GM12878 (cell line): ENCODE measurements at regions of chr4 and their contacts with region 1.

Region 1: DNA sequence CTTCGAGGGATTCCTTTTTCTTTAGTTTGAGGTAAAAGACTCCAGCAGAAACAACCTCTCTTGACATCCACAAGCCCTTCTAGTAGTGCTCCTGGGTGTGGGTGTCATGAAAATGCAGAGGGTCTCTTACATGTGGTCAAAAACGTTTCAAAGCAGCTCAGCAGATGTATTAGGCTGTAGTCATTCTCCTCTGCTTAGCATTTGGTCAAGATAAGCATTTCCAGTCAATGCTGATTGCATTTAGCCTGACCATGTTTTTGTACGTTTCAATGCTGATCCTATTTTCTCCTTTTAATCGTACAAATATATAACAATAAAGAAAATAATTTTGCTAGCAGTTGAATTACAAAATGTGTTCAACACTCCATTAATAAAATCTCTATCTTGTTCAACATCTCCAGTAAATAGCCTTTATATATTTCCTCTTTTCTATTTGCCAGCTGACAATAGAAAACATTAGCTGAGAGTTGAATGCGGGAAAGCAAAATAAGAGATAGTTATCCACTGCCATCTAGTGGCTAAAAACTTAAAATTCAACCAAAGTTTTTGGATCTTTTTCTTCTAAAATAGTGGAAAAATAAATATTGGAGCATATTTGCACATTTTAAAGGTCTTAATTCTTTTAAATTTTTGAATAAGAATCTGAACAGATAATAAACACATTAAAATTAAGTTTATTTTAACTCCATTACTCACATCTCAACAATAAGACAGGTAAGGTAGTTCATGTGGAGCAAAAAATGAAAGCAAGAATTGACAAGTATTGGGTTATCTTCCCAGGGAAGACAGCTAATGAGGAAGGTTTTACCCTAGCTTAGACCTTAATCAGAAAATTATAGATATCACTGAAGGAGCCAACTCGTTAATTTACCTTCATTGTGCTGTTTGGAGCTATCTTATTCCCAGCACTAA is 15.2 kb upstream of the PACRGL start:
- DNase-seq: no peak
- ATAC-seq: 0 out of 3 replicates have a peak, but pooled peaks have one; percentile 14
- H3K4me3 ChIP-seq: no peak overlapping the region
- H3K27ac ChIP-seq: no peak overlapping the region
- H3K4me1 ChIP-seq: no peaks in the 10 kb centered on the region
- H3K27me3 ChIP-seq: no peaks in the 10 kb centered on the region
- CTCF ChIP-seq: peak; percentile 31 to 53 (median 43); a peak in 4 of 6 replicates
- EP300 ChIP-seq: no peak
- POLR2A ChIP-seq: no peak
- RAD21 ChIP-seq: peak; percentile 76

Region 2: DNA sequence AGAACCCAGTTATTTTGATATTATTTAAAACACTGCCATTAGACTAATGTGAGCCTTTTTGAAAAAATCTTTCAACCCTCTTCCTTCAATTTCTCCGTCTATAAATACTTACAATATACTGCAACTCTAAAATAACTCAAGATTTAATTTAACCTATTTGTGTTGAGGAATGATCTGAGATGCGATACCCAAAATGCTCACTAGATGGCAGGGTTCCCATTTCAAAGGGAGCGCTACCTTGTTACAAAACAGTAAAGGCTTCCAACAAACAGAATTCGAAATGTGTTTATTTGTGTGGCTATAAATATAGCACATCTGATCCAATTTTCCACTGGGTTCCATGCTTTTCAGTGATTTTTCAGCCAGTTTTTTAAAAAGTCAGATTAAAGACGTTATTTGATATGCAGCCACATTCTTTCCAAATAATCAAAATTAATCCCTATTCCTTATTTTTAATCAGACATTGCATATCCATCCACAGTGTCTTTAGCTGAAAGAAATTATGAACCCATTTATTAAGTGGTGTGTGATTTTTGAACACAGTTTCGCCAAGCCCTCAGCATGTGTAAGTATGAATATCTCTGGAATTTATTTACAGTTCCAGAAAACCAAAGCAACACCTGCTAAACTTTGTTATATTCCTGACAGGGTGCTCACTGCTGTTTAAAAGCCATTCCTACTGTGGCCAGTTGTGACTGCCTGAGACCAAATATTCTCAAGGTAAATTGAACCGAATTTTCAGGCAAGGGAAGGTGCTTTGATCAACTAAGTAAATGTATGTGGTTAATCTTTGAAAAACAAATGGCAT is 1995.6 kb before region 1 on chr4:
- CTCF ChIA-PET with region 1: interaction called, 5 read pairs
- POLR2A ChIA-PET with region 1: no interaction called
- RAD21 ChIA-PET with region 1: no interaction called
- SMC1A ChIA-PET with region 1: no interaction called
- in situ Hi-C with region 1: loop called (anchors 5 kb)
- intact Hi-C with region 1: loop called (anchors 5 kb)
- DNase-seq: no peak
- ATAC-seq: peak; percentile 63
- H3K4me3 ChIP-seq: no peak overlapping the region
- H3K27ac ChIP-seq: no peak overlapping the region
- H3K4me1 ChIP-seq: no peaks in the 10 kb centered on the region
- H3K27me3 ChIP-seq: no peaks in the 10 kb centered on the region
- CTCF ChIP-seq: peak; percentile 70 to 76 (median 74)
- EP300 ChIP-seq: no peak
- POLR2A ChIP-seq: no peak
- RAD21 ChIP-seq: peak; percentile 92

Region 3: DNA sequence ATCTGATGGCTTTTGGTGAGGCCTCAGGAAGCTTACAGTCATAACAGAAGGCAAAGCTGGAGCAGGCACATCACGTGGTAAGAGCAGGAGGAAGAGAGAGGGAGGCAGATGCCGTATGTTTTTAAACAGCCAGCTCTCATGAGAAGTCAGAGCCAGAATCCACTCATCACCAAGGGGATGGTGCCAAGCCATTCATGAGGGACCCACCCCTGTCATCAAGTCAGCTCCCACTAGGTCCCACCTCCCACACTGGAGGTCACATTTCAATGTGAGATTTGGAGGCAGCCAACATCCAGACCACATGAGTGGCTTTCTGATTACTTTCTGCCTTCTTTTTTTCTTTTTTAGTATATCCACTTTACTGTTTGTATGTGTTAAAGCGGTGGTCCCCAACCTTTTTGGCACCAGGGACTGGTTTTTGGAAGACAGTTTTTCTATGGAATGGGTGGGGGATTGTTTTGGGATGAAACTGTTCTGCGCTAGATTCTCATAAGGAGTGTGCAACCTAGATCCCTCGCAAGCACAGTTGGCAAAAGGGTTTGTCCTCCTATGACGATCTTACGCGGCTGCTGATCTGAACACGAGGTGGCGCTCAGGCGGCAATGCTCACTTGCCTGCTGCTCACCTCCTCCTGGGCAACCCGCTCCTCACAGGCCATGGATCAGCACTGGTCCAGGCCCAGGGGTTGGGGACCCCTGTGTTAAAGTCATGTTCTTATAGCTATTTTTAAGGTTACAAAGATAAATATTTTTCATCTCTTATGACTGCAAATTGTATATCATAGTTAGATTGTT is 371.7 kb before region 1 on chr4:
- CTCF ChIA-PET with region 1: interaction called, 3 read pairs
- POLR2A ChIA-PET with region 1: no interaction called
- RAD21 ChIA-PET with region 1: no interaction called
- SMC1A ChIA-PET with region 1: interaction called, 3 read pairs
- in situ Hi-C with region 1: no loop called
- intact Hi-C with region 1: loop called (anchors 5 kb)
- DNase-seq: peak; percentile 1
- ATAC-seq: peak; percentile 80
- H3K4me3 ChIP-seq: no peak overlapping the region
- H3K27ac ChIP-seq: no peak overlapping the region
- H3K4me1 ChIP-seq: no peaks in the 10 kb centered on the region
- H3K27me3 ChIP-seq: no peaks in the 10 kb centered on the region
- CTCF ChIP-seq: peak; percentile 39 to 49 (median 39); a peak in 4 of 6 replicates
- EP300 ChIP-seq: no peak
- POLR2A ChIP-seq: no peak
- RAD21 ChIP-seq: peak; percentile 34

Region 4: GRCh38 chr4:20416800-20417199 is 268.3 kb before region 1 on chr4:
- CTCF ChIA-PET with region 1: interaction called, 17 read pairs
- POLR2A ChIA-PET with region 1: no interaction called
- RAD21 ChIA-PET with region 1: interaction called, 5 read pairs
- SMC1A ChIA-PET with region 1: interaction called, 18 read pairs
- in situ Hi-C with region 1: loop called (anchors 5 kb)
- intact Hi-C with region 1: loop called (anchors 2 kb)
- DNase-seq: no peak
- ATAC-seq: no peak
- H3K4me3 ChIP-seq: no peak overlapping the region
- H3K27ac ChIP-seq: no peak overlapping the region
- H3K4me1 ChIP-seq: no peaks in the 10 kb centered on the region
- H3K27me3 ChIP-seq: no peaks in the 10 kb centered on the region
- CTCF ChIP-seq: no peak
- EP300 ChIP-seq: no peak
- POLR2A ChIP-seq: no peak
- RAD21 ChIP-seq: no peak

Region 5: DNA sequence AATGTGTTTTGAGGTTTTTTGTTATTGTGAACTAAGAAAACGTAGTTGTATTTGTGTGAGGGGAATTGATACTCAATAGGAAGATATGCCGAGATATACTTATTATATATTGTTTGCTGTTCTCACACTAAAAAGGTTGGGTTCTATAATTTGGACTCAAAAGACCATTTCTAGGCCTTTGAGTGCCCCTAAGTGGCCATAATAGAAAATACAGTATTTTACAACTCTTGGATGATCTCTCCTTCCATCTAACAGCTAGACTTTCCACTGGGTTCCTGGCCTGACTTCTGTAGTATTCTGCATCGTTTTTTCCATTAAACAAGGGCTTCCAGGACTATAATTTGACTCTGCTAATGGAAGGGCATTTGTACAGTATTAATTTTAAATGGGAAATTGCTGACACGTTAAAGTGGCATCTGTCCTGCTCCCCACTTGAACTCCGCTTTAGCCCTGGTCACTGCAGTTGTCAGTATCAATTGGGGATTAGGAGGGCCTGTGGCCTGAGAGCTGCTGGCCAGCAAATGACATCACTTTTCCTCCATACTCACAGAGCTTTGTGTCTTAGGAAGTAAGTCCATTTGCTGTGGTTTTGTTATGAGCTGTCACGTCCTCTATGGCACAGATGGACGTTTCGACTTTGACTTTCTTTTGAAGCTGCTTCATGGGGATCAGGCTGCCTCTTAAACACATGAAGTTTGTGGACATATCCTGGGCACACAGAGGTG is 256.5 kb before region 1 on chr4:
- CTCF ChIA-PET with region 1: interaction called, 25 read pairs
- POLR2A ChIA-PET with region 1: no interaction called
- RAD21 ChIA-PET with region 1: interaction called, 3 read pairs
- SMC1A ChIA-PET with region 1: interaction called, 3 read pairs
- in situ Hi-C with region 1: loop called (anchors 5 kb)
- intact Hi-C with region 1: no loop called
- DNase-seq: no peak
- ATAC-seq: peak; percentile 53; the same call in 2 of the 3 replicates
- H3K4me3 ChIP-seq: no peak overlapping the region
- H3K27ac ChIP-seq: no peak overlapping the region
- H3K4me1 ChIP-seq: no peaks in the 10 kb centered on the region
- H3K27me3 ChIP-seq: no peaks in the 10 kb centered on the region
- CTCF ChIP-seq: peak; percentile 14 to 40 (median 28); a peak in 3 of 6 replicates
- EP300 ChIP-seq: no peak
- POLR2A ChIP-seq: no peak
- RAD21 ChIP-seq: peak; percentile 55

Region 6: DNA sequence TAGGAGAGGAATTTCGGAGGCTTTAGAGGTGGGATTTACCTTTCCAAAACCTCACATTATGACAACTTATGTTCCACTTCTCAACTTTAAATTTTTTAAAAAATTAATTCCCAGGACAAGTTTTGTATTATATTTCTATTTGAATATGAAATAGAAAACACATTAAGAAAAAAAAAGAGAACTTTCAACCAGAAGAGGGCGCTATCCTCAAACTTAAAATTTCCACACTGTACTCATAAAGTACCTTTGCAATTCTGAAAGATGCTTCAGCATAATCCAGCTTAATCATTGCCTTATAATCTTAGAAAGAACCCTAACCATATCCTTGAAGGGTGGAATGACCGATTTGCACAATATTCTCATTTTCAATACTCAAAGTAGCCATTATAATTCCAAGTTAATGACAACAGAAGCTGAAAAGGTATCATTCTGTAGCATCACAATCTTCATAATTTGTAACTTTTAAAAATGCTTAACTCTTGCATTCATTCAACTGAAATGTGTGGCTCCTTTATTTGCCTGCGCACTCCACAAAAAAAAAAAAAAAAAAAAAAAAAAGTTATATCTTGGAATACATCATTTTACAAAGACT is 1105.4 kb after region 1 on chr4:
- CTCF ChIA-PET with region 1: no interaction called
- POLR2A ChIA-PET with region 1: no interaction called
- RAD21 ChIA-PET with region 1: no interaction called
- SMC1A ChIA-PET with region 1: no interaction called
- in situ Hi-C with region 1: no loop called
- intact Hi-C with region 1: no loop called
- DNase-seq: no peak
- ATAC-seq: peak; percentile 63
- H3K4me3 ChIP-seq: no peak overlapping the region
- H3K27ac ChIP-seq: no peak overlapping the region
- H3K4me1 ChIP-seq: no peaks in the 10 kb centered on the region
- H3K27me3 ChIP-seq: no peaks in the 10 kb centered on the region
- CTCF ChIP-seq: peak; percentile 17 to 39 (median 32); a peak in 3 of 6 replicates
- EP300 ChIP-seq: no peak
- POLR2A ChIP-seq: no peak
- RAD21 ChIP-seq: peak; percentile 47